MCF 10A (cell line): ENCODE measurements at regions of chr2 and their contacts with region 1.

Region 1: DNA sequence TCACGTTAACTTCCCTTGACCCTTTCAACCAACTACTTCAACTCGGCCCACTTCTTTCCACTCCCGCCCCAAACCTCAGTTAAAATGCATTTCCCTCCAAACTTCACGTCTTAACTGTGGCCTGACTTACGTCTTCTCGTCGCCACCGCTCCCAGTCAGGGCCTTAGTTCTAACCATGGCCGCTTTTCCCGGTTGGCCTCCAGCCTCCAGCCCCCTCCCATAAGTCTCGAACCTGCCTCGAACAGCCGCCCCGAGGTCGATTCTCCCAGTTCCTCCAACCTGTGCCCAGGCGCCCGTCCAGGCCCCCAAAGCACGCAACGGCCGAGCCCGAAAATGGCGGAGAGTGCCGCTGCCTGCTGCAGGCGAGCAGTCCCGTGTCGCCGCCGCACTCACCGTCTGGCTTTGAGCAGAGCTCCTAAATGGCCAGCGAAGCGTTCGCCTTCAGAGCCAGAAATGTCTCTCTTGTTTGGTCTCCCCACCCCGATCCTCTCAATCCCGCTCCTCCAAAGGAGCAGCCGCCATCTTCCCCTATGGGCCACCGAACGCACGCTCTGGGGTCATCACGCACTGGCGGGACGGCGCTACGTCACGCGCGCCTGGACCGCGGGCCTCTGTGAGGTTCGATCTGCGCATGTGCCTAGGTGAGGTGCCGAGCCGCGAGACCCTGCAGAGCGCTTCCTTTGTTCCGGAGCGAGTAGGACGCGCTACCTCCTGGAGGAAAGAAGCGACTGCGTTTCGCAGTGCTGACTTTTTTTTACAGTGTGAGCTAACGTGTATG is at the start of gene WDR33:
- DNase-seq: peak; percentile 91
- H3K4me3 Mint-ChIP-seq: peak within 1 kb of the TSS; percentile 98
- H3K27ac Mint-ChIP-seq: peak within 1 kb of the TSS; percentile 98
- H3K4me1 Mint-ChIP-seq: peaks cover 20% of the 10 kb centered on the region
- H3K27me3 Mint-ChIP-seq: no peaks in the 10 kb centered on the region
- CTCF ChIP-seq: peak; percentile 18
- total RNA-seq, gene WDR33: 46.7 and 50.0 TPM in 2 replicates

Region 2: GRCh38 chr2:126831234-126832005 is 979.4 kb before region 1 on chr2:
- CTCF ChIA-PET with region 1: no interaction called
- POLR2A ChIA-PET with region 1: no interaction called
- intact Hi-C with region 1: no loop called
- DNase-seq: peak; percentile 2
- H3K4me3 Mint-ChIP-seq: no peak overlapping the region
- H3K27ac Mint-ChIP-seq: no peak overlapping the region
- H3K4me1 Mint-ChIP-seq: no peaks in the 10 kb centered on the region
- H3K27me3 Mint-ChIP-seq: peaks cover 11% of the 10 kb centered on the region
- CTCF ChIP-seq: no peak

Region 3: DNA sequence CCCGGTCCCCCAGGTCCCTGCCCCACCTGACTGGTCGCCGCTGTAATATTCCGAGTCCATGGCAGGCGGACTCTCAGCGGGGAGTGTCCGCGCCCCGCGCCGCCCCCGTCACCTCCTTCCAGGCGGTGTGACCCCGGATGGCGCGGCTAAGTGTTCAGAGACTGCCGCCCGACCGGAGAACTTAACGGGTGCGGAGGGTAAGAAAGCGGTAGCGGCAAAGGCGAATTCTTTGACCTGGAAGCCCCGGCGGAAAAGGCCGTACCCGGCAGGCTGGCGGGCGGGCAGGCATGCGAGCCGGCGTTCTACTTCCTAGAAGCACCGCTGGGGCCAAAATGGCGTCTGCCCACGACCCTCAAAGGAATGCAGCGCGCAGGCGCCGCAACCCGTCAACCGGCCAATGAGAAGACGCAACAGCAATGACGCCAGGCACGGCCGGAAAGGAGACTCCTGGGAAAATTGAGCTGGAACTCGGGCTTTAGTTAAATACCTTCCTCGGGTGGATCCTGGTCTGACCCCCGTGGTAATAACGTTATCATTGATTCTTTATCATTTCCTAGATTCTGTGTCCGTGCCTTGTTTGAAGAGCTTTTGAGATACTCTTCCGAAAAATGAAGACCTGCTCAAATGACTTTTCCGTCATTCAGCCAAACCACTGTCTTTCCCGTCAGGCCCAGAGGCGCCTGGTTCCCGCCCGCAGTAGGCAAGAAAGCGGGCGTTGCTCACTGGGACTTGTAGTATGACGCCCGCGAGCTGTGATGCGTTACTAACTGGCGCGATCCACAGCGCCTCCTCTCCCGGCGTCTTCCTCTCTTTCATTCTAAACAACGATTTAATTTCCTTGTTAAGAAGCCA is 284.4 kb before region 1 on chr2 and contains the start of gene IWS1:
- CTCF ChIA-PET with region 1: no interaction called
- POLR2A ChIA-PET with region 1: interaction called, 9 read pairs
- intact Hi-C with region 1: loop called (anchors 10 kb)
- DNase-seq: peak; percentile 97
- H3K4me3 Mint-ChIP-seq: peak within 1 kb of the TSS; percentile 79
- H3K27ac Mint-ChIP-seq: peak within 1 kb of the TSS; percentile 95
- H3K4me1 Mint-ChIP-seq: peaks cover 17% of the 10 kb centered on the region
- H3K27me3 Mint-ChIP-seq: no peaks in the 10 kb centered on the region
- CTCF ChIP-seq: no peak
- total RNA-seq, gene IWS1: 56.8 and 57.0 TPM in 2 replicates

Region 4: DNA sequence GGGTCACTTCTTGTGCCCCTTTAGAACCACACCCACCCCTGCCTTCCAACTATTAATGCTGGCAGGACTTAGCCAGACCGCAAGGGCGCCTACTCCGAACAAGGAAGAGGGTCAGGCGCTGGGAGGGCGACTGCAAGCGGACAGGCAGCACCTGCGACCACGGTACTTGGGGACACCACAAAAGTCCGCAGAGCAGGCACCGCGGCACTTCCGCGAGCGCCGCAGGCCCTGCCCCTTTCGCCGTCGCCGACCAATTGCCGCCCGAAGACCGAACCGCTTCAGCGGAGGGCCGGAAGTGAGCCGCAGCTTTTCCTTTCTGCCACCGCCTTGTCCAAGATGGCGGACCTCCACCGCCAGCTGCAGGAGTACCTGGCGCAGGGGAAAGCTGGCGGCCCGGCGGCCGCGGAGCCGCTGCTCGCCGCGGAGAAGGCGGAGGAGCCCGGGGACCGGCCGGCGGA is 109.6 kb before region 1 on chr2 and contains the start of gene SFT2D3:
- CTCF ChIA-PET with region 1: no interaction called
- POLR2A ChIA-PET with region 1: interaction called, 11 read pairs
- intact Hi-C with region 1: loop called (anchors 5 kb)
- DNase-seq: peak; percentile 86
- H3K4me3 Mint-ChIP-seq: peak within 1 kb of the TSS; percentile 84
- H3K27ac Mint-ChIP-seq: peak within 1 kb of the TSS; percentile 94
- H3K4me1 Mint-ChIP-seq: peaks cover 19% of the 10 kb centered on the region
- H3K27me3 Mint-ChIP-seq: no peaks in the 10 kb centered on the region
- CTCF ChIP-seq: no peak
- total RNA-seq, gene SFT2D3: 3.6 and 4.1 TPM in 2 replicates

Region 5: GRCh38 chr2:127770973-127771735 is 39.7 kb before region 1 on chr2:
- CTCF ChIA-PET with region 1: interaction called, 3 read pairs
- POLR2A ChIA-PET with region 1: interaction called, 32 read pairs
- intact Hi-C with region 1: loop called (anchors 1 kb)
- DNase-seq: peak; percentile 88
- H3K4me3 Mint-ChIP-seq: no peak overlapping the region
- H3K27ac Mint-ChIP-seq: peak overlapping the region; percentile 89
- H3K4me1 Mint-ChIP-seq: peaks cover 18% of the 10 kb centered on the region
- H3K27me3 Mint-ChIP-seq: no peaks in the 10 kb centered on the region
- CTCF ChIP-seq: no peak

Region 6: GRCh38 chr2:127829845-127830246 is 19.0 kb after region 1 on chr2:
- CTCF ChIA-PET with region 1: interaction called, 3 read pairs
- POLR2A ChIA-PET with region 1: interaction called, 21 read pairs
- intact Hi-C with region 1: no loop called
- DNase-seq: no peak
- H3K4me3 Mint-ChIP-seq: no peak overlapping the region
- H3K27ac Mint-ChIP-seq: no peak overlapping the region
- H3K4me1 Mint-ChIP-seq: peaks cover 5% of the 10 kb centered on the region
- H3K27me3 Mint-ChIP-seq: no peaks in the 10 kb centered on the region
- CTCF ChIP-seq: no peak

Region 7: DNA sequence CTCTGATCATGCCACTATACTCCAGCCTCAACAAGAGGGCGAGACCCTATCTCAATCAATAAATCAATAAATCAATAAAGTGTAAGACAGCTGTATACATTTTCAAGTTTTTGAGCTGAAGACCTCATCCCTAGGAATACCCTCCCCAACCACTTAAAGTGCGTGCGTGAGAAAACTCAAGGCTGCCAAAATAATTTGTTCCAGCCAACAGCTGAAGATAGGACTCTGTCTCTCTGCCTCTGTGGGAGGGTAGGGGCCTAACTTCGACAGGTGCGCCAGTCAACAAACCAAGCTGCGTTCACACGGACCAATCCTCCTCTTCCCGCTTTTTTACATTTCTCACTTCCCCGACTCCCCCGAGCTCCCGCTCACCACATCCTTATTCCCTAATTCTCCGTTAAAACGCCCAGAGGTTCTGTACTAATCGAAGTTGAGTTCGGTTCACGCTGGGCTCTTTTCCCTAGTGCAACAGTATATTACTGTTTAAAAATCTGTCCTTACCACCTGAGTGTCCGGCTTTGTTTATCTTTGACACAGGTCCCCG is 46.5 kb after region 1 on chr2:
- CTCF ChIA-PET with region 1: interaction called, 3 read pairs
- POLR2A ChIA-PET with region 1: interaction called, 13 read pairs
- intact Hi-C with region 1: no loop called
- DNase-seq: peak; percentile 25
- H3K4me3 Mint-ChIP-seq: peak overlapping the region; percentile 85
- H3K27ac Mint-ChIP-seq: peak overlapping the region; percentile 87
- H3K4me1 Mint-ChIP-seq: peaks cover 20% of the 10 kb centered on the region
- H3K27me3 Mint-ChIP-seq: no peaks in the 10 kb centered on the region
- CTCF ChIP-seq: no peak

Region 8: GRCh38 chr2:127932199-127932878 is 121.5 kb after region 1 on chr2:
- CTCF ChIA-PET with region 1: no interaction called
- POLR2A ChIA-PET with region 1: no interaction called
- intact Hi-C with region 1: no loop called
- DNase-seq: peak; percentile 84
- H3K4me3 Mint-ChIP-seq: no peak overlapping the region
- H3K27ac Mint-ChIP-seq: no peak overlapping the region
- H3K4me1 Mint-ChIP-seq: peaks cover 4% of the 10 kb centered on the region
- H3K27me3 Mint-ChIP-seq: no peaks in the 10 kb centered on the region
- CTCF ChIP-seq: no peak